ENCODE measurements at regions of chr12 and their contacts with region 1.

Region 1: DNA sequence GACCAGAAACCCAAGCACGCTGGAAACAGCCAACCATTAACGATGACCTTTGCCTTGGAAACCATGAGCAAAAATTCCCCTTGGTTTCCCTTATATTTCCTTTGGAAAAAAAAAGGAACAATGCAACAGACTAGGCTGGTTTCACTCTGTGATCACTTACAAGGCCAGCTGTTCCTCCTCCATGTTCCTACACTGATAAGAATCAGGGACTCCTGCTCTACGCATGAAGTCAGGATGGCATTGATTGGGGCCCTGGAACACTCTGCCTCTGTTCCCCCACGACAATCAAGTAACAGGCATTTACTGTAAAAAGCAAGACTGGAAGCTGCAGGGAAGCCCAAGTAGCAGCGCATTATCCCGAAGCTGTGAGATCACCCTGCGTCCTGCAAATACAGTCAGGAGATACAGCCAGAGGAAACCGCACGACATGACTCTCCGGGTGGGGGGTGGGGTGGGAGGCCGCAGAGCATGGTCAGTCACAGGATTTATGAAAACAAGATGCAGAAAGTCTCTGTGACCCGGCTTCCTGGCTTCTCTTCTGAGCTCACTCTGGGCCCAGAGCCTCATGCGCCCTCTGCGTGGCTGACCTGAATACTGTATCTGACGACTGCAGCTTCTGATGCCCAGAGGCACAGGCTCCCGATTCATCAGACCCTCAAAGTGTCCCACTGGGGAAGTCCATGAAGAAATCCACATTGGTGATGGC is 31.1 kb downstream of the SSH1 start:
- DNase-seq: peak; percentile 83
- H3K4me3 ChIP-seq: peak overlapping the region; percentile 47
- H3K27ac ChIP-seq: peak overlapping the region; percentile 100
- H3K27me3 ChIP-seq: no peaks in the 10 kb centered on the region
- CTCF ChIP-seq: peak; percentile 20; the same call in 1 of the 2 replicates

Region 2: DNA sequence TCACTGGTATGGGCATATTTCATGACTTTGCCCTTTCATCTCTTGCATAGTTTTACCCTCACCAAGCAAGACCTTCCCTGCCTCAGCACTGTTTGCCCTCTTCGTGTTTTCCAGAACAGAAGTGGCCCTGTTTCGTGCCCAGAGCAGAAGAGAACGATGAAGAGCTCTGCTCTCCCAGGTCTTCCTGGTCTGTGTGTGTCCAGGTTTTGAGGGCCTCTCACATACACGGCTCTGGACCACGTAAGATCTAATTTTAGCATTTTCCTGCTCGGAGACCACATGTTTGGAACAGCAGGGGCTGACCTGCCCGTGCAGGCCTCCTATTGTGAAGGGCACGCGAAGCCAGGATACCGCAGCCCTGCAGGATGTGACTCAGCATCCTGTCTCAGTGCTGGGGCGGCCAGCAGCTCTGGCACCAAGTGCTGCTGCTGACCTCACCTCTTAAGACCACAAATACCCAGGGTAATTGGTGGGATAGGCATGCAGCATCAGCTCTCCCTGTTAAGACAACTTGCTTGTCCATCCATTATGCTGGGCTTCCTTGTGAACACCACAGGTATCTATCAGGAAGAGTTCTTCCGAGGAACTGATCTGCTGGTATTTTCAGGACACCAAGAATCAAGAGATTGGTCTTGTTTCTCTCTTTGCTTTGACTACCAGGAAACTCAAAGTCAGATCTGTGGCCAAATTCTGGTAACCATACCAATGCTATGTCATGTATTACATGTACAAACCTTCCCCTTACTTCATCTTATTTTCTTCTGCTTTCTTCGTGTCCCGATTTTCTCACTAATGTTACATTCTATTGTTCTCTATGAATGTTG is 12.2 kb after region 1 on chr12:
- CTCF ChIA-PET with region 1: interaction called, 3 read pairs
- POLR2A ChIA-PET with region 1: interaction called, 47 read pairs
- DNase-seq: peak; percentile 100
- H3K4me3 ChIP-seq: peak overlapping the region; percentile 20; the same call in 1 of the 2 replicates
- H3K27ac ChIP-seq: peak overlapping the region; percentile 98
- H3K27me3 ChIP-seq: no peaks in the 10 kb centered on the region
- CTCF ChIP-seq: no peak